CD4-positive, alpha-beta T cell (primary cell): ENCODE measurements at regions of chr11 and their contacts with region 1.

Region 1: DNA sequence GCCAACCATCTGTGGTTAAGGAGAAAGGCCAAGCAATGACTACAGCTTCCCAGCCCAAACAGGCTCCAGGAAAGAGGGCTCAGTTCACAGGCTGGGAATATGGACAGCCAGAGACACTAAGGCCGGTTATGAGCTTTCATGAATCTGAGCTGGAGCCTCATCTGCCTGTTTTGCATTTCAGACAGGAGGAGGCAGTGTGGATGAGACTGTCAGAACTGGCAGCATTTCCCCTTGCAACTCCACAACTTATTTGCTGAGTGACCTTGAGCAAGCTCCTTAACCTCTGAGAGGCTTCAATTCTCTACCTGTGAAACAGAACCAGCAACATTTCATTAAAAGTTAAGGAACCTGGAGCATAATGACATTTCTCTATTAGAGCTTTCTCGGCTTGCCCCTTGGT is 264.0 kb downstream of the ETS1 start:
- DNase-seq: peak in 6 of 14 experiments; percentile 37 to 83 (median 66)
- ATAC-seq: peak; percentile 10
- H3K4me3 ChIP-seq: no peak overlapping the region
- H3K4me3 Mint-ChIP-seq: peak overlapping the region; percentile 47
- H3K27ac ChIP-seq: peak overlapping the region; percentile 89 to 91
- H3K27ac Mint-ChIP-seq: peak overlapping the region; percentile 93
- H3K4me1 ChIP-seq: peaks cover 85% of the 10 kb centered on the region
- H3K4me1 Mint-ChIP-seq: peaks cover 84% of the 10 kb centered on the region
- H3K27me3 ChIP-seq: no peaks in the 10 kb centered on the region
- H3K27me3 Mint-ChIP-seq: no peaks in the 10 kb centered on the region
- CTCF ChIP-seq: peak; percentile 52

Region 2: GRCh38 chr11:128302425-128303186 is 20.8 kb before region 1 on chr11:
- CTCF ChIA-PET with region 1: interaction called, 30 read pairs
- POLR2A ChIA-PET with region 1: interaction called, 49 read pairs
- intact Hi-C with region 1: loop called (anchors 1 kb)
- DNase-seq: peak; percentile 49 to 97 (median 65)
- ATAC-seq: peak; percentile 85
- H3K4me3 ChIP-seq: peak overlapping the region; percentile 65
- H3K4me3 Mint-ChIP-seq: peak overlapping the region; percentile 94
- H3K27ac ChIP-seq: peak overlapping the region; percentile 90 to 94
- H3K27ac Mint-ChIP-seq: peak overlapping the region; percentile 100
- H3K4me1 ChIP-seq: peaks cover 82% of the 10 kb centered on the region
- H3K4me1 Mint-ChIP-seq: peaks cover 98% of the 10 kb centered on the region
- H3K27me3 ChIP-seq: no peaks in the 10 kb centered on the region
- H3K27me3 Mint-ChIP-seq: no peaks in the 10 kb centered on the region
- CTCF ChIP-seq: peak; percentile 46

Region 3: DNA sequence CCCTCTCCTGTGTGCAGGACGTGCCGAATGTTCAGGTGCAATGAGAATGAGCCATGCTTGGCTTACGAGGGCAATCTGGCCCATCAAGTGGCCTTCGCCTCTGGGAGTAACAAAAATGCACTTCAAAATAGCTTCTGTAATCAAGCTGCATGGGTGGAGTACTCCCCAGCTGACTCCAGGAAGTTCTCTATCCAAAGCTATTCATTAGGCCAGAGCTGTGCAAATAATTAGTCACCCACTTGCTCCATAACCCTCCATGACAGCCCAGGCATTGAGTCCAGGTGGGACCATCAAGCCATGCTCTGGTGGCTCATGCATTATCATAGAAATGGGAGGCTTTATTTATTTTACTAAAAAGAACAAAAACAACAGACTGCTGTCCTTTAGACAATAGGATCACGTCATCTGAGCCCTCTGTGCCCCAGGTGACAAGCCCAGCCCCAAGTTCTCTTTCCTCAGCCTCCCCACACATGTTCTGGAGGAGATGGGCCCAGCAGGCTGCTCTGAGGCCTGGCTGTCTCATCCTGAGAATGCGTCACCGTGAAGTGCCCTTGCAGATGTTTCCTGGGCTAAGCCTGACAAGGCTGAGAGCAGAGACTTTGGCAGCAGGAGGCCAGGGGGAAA is 19.2 kb after region 1 on chr11:
- CTCF ChIA-PET with region 1: interaction called, 8 read pairs
- POLR2A ChIA-PET with region 1: interaction called, 23 read pairs
- intact Hi-C with region 1: loop called in 1 of 2 experiments (anchors 2 kb)
- DNase-seq: peak in 11 of 14 experiments; percentile 24 to 83 (median 67)
- ATAC-seq: peak; percentile 67
- H3K4me3 ChIP-seq: no peak overlapping the region
- H3K4me3 Mint-ChIP-seq: peak overlapping the region; percentile 73
- H3K27ac ChIP-seq: peak overlapping the region; percentile 79 to 88
- H3K27ac Mint-ChIP-seq: peak overlapping the region; percentile 99
- H3K4me1 ChIP-seq: peaks cover 65% of the 10 kb centered on the region
- H3K4me1 Mint-ChIP-seq: peaks cover 97% of the 10 kb centered on the region
- H3K27me3 ChIP-seq: no peaks in the 10 kb centered on the region
- H3K27me3 Mint-ChIP-seq: no peaks in the 10 kb centered on the region
- CTCF ChIP-seq: no peak

Region 4: GRCh38 chr11:128422576-128423370 is 99.4 kb after region 1 on chr11:
- CTCF ChIA-PET with region 1: interaction called, 24 read pairs
- POLR2A ChIA-PET with region 1: interaction called, 7 read pairs
- intact Hi-C with region 1: loop called in 1 of 2 experiments (anchors 1 kb)
- DNase-seq: peak; percentile 64 to 96 (median 82)
- ATAC-seq: peak; percentile 92
- H3K4me3 ChIP-seq: peak overlapping the region; percentile 13
- H3K4me3 Mint-ChIP-seq: peak overlapping the region; percentile 74
- H3K27ac ChIP-seq: peak overlapping the region in 1 of 2 donors; percentile 24
- H3K27ac Mint-ChIP-seq: peak overlapping the region; percentile 96
- H3K4me1 ChIP-seq: peaks cover 37% of the 10 kb centered on the region
- H3K4me1 Mint-ChIP-seq: peaks cover 75% of the 10 kb centered on the region
- H3K27me3 ChIP-seq: no peaks in the 10 kb centered on the region
- H3K27me3 Mint-ChIP-seq: no peaks in the 10 kb centered on the region
- CTCF ChIP-seq: no peak

Region 5: DNA sequence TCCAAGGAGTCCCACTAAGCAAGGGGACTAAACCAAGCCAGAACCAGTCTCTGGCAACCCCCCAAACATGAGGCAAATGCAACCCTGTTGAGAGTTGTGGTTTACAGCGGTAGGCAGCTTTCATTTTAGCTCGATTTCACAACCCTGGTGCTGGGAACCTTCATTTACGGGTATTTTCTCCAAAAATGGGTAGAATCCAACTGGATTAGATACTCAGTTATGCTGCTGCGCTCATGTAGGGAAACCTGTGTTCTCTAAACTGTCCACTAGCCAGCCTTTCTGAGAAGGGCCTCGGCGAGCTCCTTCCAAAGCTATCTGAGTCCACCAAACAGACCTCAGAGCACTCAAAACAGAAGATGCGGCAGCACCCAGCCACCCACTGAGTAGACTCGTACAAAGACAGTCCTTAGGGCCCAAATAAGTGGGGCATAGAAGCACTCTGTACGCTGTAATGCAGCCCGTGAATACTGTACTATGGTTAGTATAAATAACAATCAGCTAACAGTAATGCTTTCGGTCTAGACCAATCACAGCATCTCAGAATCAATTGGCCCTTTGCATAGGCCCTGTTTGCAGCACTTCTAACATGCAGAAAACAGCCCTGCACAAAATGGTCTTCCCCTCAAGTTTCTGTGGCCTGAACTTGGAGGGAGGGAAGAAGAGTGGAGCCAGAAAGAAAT is 159.3 kb after region 1 on chr11:
- CTCF ChIA-PET with region 1: no interaction called
- POLR2A ChIA-PET with region 1: interaction called, 98 read pairs
- intact Hi-C with region 1: no loop called
- DNase-seq: peak in 6 of 14 experiments; percentile 51 to 87 (median 70)
- ATAC-seq: peak; percentile 58
- H3K4me3 ChIP-seq: peak overlapping the region; percentile 46
- H3K4me3 Mint-ChIP-seq: peak overlapping the region; percentile 76
- H3K27ac ChIP-seq: peak overlapping the region; percentile 92 to 94
- H3K27ac Mint-ChIP-seq: peak overlapping the region; percentile 99
- H3K4me1 ChIP-seq: peaks cover 95% of the 10 kb centered on the region
- H3K4me1 Mint-ChIP-seq: peaks cover 99% of the 10 kb centered on the region
- H3K27me3 ChIP-seq: no peaks in the 10 kb centered on the region
- H3K27me3 Mint-ChIP-seq: no peaks in the 10 kb centered on the region
- CTCF ChIP-seq: no peak